Prostate gland (tissue), 2 donors: ENCODE measurements at regions of chr1 and their contacts with region 1.

Region 1: DNA sequence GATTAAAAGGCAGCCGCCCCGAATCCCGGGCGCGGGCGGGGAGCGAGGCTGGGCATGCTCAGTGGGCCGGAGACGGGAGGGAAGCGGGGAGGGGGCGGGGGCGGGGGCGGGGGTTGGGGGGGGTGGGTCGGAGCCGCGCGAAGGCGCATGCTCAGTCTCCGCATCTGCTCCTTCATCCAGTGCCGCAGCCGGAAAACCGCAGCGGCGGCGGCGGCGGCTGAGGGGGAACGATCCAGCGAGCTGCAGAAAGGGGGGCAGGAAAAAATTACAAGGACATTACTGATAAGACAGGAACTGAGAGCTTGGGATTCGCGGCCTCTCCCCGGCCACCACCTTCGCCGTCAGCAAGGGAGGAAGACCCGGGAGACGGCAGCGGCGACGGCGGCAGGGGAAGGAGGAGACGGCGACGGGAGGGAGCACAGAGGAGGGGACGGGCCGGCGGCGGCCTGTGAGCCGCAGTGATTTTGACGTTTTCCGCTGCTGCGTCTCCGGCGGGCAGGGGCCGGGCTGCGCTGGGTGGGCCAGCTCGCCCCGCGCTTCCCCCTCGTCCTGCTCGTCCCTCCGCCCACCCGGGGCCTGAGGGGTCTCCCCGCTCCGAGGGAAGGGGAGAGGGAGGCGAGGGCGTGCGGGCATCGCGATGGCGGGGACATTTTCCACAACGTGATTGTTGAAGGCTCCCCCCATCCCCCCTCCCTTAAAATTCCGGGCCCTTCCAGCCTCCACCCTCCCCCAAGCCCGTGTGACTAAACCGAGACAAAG is at the start of gene CAMSAP2:
- DNase-seq: peak; percentile 81
- H3K4me3 ChIP-seq: peak within 1 kb of the TSS; percentile 85 to 95
- H3K27ac ChIP-seq: peak within 1 kb of the TSS; percentile 99 to 100
- H3K4me1 ChIP-seq: no peaks in the 10 kb centered on the region
- H3K27me3 ChIP-seq: no peaks in the 10 kb centered on the region
- CTCF ChIP-seq: peak in 1 of 4 experiments; percentile 11
- POLR2A ChIP-seq: peak; percentile 87
- total RNA-seq, gene CAMSAP2: 15.8 to 22.8 TPM

Region 2: DNA sequence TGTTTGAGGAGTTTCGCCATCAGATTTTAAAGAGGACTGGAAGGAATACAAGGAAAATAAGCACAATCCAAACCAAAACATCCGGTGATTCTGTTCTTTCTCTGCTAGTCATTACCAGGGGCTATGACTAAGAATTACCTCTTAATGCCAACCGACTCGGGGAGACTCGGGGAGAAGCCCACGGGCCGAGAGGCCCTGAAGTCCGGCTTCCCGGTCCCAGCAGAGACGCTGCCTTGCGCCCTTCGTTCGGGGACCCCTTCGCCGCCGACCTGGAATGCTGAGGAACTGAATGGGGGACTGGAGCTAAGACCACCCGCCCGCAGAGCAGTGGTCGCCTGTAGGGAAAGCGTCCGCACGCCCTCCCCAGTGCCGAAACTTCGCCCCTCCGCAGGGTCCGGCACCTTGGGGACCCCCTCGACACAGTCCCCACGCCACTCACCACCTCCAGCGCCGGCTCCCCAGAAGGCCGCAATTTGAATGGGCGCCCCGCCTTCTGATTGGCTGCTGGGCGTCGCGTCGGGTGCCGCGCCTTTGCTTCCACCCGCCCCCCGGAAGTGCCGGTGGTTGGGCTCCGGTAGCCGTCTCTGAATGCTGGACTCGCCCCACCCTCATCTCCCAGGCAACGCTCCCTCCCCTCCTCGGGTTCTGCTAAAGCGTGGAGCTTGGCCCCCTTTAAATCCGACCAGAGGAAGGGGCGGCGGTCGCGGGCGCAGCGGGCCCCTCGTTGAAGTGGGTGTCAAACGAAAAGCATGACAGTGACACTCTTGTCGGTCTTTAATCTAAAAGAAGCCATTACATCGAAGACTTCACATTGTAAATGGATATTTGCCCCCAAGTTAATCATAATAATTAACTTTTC is 118.4 kb before region 1 on chr1 and contains the start of gene KIF14:
- intact Hi-C with region 1: loop called (anchors 5 kb)
- DNase-seq: peak; percentile 88
- H3K4me3 ChIP-seq: peak within 1 kb of the TSS; percentile 47 to 55
- H3K27ac ChIP-seq: peak within 1 kb of the TSS; percentile 29 to 48
- H3K4me1 ChIP-seq: no peaks in the 10 kb centered on the region
- H3K27me3 ChIP-seq: no peaks in the 10 kb centered on the region
- CTCF ChIP-seq: peak in 1 of 4 experiments; percentile 22
- POLR2A ChIP-seq: no peak
- total RNA-seq, gene KIF14: 0.23 to 1.7 TPM

Region 3: DNA sequence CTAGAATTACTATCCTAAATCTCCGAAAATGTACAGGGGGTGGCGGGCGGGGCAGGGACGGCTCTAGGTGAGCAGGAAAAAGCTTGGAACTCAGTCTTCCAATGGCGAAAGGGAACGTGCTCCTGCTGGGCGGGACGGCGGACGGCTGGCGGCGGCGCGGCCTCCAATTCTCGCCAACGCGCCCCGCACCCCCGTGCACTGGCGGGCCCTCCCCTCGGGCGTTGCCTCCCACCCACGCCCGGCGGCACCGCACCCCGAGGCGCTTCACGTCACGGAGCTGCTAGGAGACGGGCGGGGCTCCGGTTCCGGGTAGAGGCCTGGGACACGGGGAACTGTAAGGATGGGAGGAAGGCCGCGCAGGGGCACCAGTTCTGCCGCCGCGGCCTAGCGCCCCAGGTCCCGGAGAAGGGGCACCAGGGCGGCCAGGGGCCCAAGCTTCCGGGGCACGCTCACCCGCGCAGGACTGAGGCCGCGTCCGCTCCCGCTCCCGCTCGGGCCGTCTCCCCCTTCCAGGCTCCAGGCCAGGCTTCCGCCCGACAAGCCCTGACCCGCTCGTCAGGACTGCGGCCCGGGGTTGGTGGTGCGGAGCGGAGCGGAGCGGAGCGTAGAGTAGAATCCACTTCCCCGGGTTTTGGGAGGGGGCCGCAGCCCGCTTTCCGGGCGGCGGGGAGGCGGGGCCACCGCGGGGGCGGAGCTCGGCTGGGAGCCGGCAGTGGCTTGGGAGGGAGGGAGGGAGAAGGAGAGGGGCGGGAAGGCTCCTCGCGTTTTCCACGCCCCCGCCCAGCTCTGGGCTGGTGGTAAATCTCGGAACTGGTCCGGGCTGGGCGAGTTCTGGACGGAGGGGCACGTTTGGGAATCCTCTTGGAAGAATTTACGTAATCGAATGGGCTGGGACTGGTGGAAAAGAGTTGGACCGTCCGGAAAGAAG is 69.3 kb before region 1 on chr1 and contains the start of gene DDX59:
- intact Hi-C with region 1: loop called (anchors 1 kb)
- DNase-seq: peak; percentile 94
- H3K4me3 ChIP-seq: peak within 1 kb of the TSS; percentile 70 to 88
- H3K27ac ChIP-seq: peak within 1 kb of the TSS; percentile 95 to 98
- H3K4me1 ChIP-seq: no peaks in the 10 kb centered on the region
- H3K27me3 ChIP-seq: no peaks in the 10 kb centered on the region
- CTCF ChIP-seq: peak in 2 of 4 experiments; percentile 12 to 21
- POLR2A ChIP-seq: peak; percentile 71
- total RNA-seq, gene DDX59: 19.5 to 28.1 TPM

Region 4: GRCh38 chr1:200802865-200803512 is 64.1 kb after region 1 on chr1:
- intact Hi-C with region 1: loop called (anchors 5 kb)
- DNase-seq: peak; percentile 80
- H3K4me3 ChIP-seq: no peak overlapping the region
- H3K27ac ChIP-seq: no peak overlapping the region
- H3K4me1 ChIP-seq: no peaks in the 10 kb centered on the region
- H3K27me3 ChIP-seq: no peaks in the 10 kb centered on the region
- CTCF ChIP-seq: peak; percentile 75 to 92 (median 88)
- POLR2A ChIP-seq: no peak